Dendritic cell treated with granulocyte-macrophage colony-stimulating factor and Interleukin-4, amounts not matched to agents 40 ng/mL and 50 ng/mL, for 4 days (primary cell): ENCODE measurements at regions of chr3 and their contacts with region 1.

Region 1: DNA sequence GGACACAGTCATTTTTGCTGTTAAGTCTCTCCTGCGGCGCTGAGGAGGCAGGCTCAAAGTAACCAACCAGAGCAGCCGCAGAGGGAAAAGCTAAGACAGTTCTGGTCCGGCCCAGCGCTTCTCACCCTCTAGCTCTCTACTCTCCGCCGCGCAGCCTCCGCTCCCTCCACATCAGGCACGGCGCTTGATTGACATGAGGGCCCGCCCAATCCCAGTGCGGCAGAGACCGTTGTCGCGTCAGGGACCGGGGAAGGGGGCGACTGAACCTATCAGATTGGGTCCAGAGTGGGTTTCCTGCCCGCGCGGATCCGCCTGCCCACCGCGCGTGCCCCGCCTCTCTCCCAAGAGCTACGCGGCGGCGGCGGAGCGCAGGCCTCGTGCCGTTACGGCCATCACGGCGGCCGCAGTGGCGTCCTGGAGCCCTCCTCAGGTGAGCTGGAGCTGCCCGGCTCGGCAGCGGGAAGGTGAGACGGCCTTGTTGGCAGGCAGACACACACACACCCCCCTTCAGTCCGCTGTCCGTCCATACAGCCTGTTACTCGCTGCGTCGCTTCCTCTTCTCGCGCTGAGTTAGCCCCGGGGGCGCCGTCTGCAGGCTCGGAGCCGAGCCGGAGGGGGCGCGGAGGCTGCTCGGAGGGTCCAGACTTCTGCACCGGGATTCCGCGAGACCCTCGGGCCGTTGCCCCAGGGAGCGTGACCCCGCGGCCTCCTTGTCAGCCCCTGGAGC is at the start of gene NCK1:
- H3K4me3 Mint-ChIP-seq: peak within 1 kb of the TSS; percentile 97
- H3K27ac Mint-ChIP-seq: peak within 1 kb of the TSS; percentile 98
- H3K4me1 Mint-ChIP-seq: peaks cover 46% of the 10 kb centered on the region
- H3K27me3 Mint-ChIP-seq: no peaks in the 10 kb centered on the region

Region 2: DNA sequence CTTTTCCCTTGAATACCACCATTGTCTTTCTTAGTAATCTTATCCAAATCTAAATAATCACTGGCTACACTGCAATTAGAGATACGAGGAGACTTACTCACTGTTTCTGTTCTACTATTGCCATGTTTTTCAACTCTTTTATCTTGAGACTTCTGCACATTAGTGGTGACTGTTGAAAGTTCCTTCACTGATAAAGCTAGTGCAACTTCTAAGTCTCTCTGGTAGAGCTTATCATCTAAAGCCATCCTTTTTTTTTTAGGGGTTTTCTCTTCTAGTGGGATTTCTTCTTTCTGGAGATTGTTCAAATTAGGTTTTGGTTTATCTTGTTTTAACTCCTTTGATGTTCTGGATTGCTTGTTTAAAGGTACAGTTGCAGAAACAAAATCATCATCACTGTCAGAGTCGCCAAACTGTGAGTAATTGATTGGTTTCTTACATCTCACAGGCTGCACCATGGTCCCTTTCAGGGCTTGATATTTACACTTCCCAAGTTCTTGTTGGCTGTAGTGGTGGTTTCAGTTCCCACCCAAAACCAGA is 37.6 kb after region 1 on chr3:
- intact Hi-C with region 1: loop called (anchors 5 kb)
- H3K4me3 Mint-ChIP-seq: no peak overlapping the region
- H3K27ac Mint-ChIP-seq: peak overlapping the region; percentile 74
- H3K4me1 Mint-ChIP-seq: peaks cover 47% of the 10 kb centered on the region
- H3K27me3 Mint-ChIP-seq: no peaks in the 10 kb centered on the region

Region 3: GRCh38 chr3:137008976-137009375 is 146.9 kb after region 1 on chr3:
- intact Hi-C with region 1: loop called (anchors 10 kb)
- H3K4me3 Mint-ChIP-seq: no peak overlapping the region
- H3K27ac Mint-ChIP-seq: no peak overlapping the region
- H3K4me1 Mint-ChIP-seq: peaks cover 7% of the 10 kb centered on the region
- H3K27me3 Mint-ChIP-seq: no peaks in the 10 kb centered on the region

Region 4: GRCh38 chr3:137385922-137386321 is 523.9 kb after region 1 on chr3:
- intact Hi-C with region 1: no loop called
- H3K4me3 Mint-ChIP-seq: no peak overlapping the region
- H3K27ac Mint-ChIP-seq: no peak overlapping the region
- H3K4me1 Mint-ChIP-seq: no peaks in the 10 kb centered on the region
- H3K27me3 Mint-ChIP-seq: no peaks in the 10 kb centered on the region